Activated T-helper 1 cell treated with anti-CD3 and anti-CD28 coated beads, Interleukin-12 subunit alpha, Interleukin-12 subunit beta, Interleukin-2, Interleukin-4 antibody, amounts not matched to agents 30 ng/mL and 10 ng/mL and 1 ng/mL, durations not matched to agents 14 hours and 24 hours and 36 hours (primary cell): ENCODE measurements at regions of chr19 and their contacts with region 1.

Region 1: DNA sequence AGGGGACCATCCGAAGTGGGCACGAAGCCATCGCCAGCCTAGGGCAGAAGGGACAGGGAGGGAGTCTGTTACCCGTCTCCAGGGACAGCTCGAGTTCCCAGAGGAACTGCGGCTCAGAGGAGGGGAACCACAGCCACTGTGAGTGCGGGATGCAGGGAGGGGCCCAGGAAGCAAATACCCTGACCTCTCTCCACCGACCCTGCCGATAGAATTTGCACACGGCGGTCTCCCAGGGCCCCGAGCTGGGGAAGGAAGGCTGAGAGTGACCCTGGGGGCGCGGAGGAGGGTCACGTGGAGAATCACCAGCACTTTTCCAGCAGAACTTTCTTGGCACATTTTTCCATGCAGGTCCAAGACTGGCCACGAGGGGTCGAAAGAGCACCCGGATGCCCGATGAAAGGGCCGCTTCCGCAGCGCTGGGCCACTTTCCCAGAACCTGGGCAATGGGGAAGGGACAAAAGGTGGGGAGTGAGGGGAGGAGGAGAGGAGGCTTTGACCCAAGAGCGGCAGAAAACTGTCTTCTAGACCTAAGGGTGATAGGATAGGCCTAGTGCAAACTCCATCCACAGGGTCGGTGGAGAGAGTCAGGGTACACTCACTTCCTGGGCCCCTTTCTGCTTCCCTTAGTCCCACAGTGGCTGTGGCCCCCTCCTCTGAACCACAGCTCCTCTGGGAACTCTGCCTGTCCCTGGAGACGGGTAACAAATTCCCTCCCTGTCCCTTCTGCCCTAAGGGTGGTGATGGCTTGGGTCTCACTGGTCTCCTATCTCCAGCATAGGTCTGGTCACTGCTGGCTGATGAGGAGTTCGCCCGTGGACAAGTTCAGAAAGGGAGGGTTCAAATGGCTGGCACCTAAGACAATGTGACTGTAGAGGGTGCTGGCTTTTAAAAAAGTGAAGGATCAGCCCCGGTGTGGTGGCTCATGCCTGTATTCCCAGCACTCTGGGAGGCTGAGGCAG is 5.3 kb upstream of the GPR4 start:
- DNase-seq: peak; percentile 19
- H3K4me3 Mint-ChIP-seq: no peak overlapping the region
- H3K27ac Mint-ChIP-seq: peak overlapping the region; percentile 73
- H3K4me1 Mint-ChIP-seq: peaks cover 11% of the 10 kb centered on the region
- H3K27me3 Mint-ChIP-seq: peaks cover 12% of the 10 kb centered on the region

Region 2: GRCh38 chr19:45439569-45440254 is 167.6 kb before region 1 on chr19:
- intact Hi-C with region 1: no loop called
- DNase-seq: peak; percentile 73
- H3K4me3 Mint-ChIP-seq: peak overlapping the region; percentile 77
- H3K27ac Mint-ChIP-seq: peak overlapping the region; percentile 71
- H3K4me1 Mint-ChIP-seq: peaks cover 34% of the 10 kb centered on the region
- H3K27me3 Mint-ChIP-seq: peaks cover 3% of the 10 kb centered on the region

Region 3: GRCh38 chr19:45653634-45654033 is 46.3 kb after region 1 on chr19:
- intact Hi-C with region 1: no loop called
- DNase-seq: no peak
- H3K4me3 Mint-ChIP-seq: no peak overlapping the region
- H3K27ac Mint-ChIP-seq: no peak overlapping the region
- H3K4me1 Mint-ChIP-seq: no peaks in the 10 kb centered on the region
- H3K27me3 Mint-ChIP-seq: peaks cover 3% of the 10 kb centered on the region

Region 4: GRCh38 chr19:45681391-45682015 is 74.2 kb after region 1 on chr19:
- intact Hi-C with region 1: loop called (anchors 1 kb)
- DNase-seq: peak; percentile 87
- H3K4me3 Mint-ChIP-seq: peak overlapping the region; percentile 80
- H3K27ac Mint-ChIP-seq: peak overlapping the region; percentile 82
- H3K4me1 Mint-ChIP-seq: peaks cover 20% of the 10 kb centered on the region
- H3K27me3 Mint-ChIP-seq: peaks cover 2% of the 10 kb centered on the region